ENCODE measurements at regions of chrX and their contacts with region 1.

Region 1: GRCh38 chrX:130902783-130903613 is at the start of gene ENOX2:
- DNase-seq: peak; percentile 96
- ATAC-seq: peak; percentile 98
- H3K4me3 ChIP-seq: peak within 1 kb of the TSS; percentile 72
- H3K27ac ChIP-seq: peak within 1 kb of the TSS; percentile 74
- H3K4me1 ChIP-seq: peaks cover 5% of the 10 kb centered on the region; the same call in 1 of the 2 replicates
- H3K27me3 ChIP-seq: no peaks in the 10 kb centered on the region
- CTCF ChIP-seq: no peak
- total RNA-seq, gene ENOX2: 11.8 and 17.3 TPM in 2 replicates

Region 2: DNA sequence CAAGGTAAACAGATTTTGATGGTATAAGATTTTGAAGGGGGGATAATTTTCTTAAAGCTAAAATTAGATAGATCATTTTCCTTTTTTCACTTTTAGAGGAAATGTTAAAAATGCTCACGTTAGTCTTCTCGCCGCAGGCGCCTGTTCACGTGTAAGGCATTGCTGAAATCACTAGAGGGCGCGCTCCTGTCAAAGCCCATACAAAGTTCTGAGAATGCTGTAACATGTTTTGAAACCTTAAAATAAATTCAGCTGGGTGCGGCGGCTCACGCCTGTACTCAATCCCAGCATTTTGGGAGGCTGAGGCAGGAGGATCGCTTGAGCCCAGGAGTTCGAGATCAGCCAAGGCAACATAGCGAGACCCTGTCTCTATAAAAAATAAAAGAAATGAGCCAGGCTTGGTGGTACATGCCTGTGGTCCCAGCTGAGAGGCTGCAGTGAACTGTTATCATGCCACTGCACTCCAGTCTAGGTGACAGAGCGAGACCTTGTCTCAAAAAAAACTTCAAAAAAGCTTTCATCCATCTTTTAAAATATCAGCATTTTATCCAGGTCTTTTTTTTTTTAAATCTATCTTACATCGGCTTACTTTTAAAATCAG is 363.2 kb before region 1 on chrX:
- CTCF ChIA-PET with region 1: no interaction called
- POLR2A ChIA-PET with region 1: no interaction called
- intact Hi-C with region 1: loop called (anchors 5 kb)
- DNase-seq: peak; percentile 63
- ATAC-seq: peak; percentile 55
- H3K4me3 ChIP-seq: no peak overlapping the region
- H3K27ac ChIP-seq: no peak overlapping the region
- H3K4me1 ChIP-seq: no peaks in the 10 kb centered on the region
- H3K27me3 ChIP-seq: no peaks in the 10 kb centered on the region
- CTCF ChIP-seq: peak; percentile 78

Region 3: GRCh38 chrX:130716781-130717413 is 186.1 kb before region 1 on chrX:
- CTCF ChIA-PET with region 1: no interaction called
- POLR2A ChIA-PET with region 1: no interaction called
- intact Hi-C with region 1: loop called (anchors 2 kb)
- DNase-seq: peak; percentile 25
- ATAC-seq: peak; percentile 57
- H3K4me3 ChIP-seq: no peak overlapping the region
- H3K27ac ChIP-seq: peak overlapping the region; percentile 6; the same call in 1 of the 2 replicates
- H3K4me1 ChIP-seq: peaks cover 40% of the 10 kb centered on the region
- H3K27me3 ChIP-seq: no peaks in the 10 kb centered on the region
- CTCF ChIP-seq: no peak

Region 4: DNA sequence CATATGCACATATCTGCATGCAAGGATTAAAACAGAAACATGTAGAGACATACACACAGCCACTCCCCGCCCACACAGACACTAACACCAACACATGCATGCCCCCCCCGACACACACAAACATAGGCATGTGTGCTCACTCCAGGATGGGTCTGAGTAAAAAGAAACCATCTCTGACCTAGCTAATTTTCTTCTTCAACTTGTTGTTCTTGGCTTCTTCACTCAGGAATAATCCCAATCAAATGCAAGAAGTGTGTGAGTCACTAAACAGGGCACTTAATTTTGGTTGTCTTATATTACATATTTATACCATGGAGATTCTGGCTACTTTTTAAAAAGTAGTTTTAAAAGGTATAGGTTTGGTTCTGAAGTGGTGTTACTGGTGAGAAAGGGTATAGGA is 28.2 kb before region 1 on chrX:
- CTCF ChIA-PET with region 1: no interaction called
- POLR2A ChIA-PET with region 1: no interaction called
- intact Hi-C with region 1: no loop called
- DNase-seq: no peak
- ATAC-seq: no peak
- H3K4me3 ChIP-seq: no peak overlapping the region
- H3K27ac ChIP-seq: no peak overlapping the region
- H3K4me1 ChIP-seq: peaks cover 22% of the 10 kb centered on the region
- H3K27me3 ChIP-seq: no peaks in the 10 kb centered on the region
- CTCF ChIP-seq: no peak

Region 5: DNA sequence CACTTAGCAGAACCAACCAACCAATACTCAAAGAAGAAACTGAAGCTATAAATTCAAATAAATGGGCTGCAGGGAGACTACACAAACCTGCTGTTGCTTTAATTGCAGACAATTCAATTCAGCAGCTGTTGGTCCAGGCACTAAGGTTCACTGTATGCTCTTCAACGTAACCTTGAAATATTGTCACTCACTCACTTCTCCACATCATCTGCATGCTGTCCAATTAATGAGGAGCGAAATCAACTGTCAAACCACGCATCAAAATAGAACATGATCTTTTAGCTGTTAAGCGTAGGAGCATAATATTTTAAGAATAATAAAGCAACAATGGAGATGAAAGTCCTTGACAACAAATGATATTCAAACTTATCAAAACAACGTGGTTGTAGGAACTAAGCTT is 17.0 kb before region 1 on chrX:
- CTCF ChIA-PET with region 1: no interaction called
- POLR2A ChIA-PET with region 1: interaction called, 14 read pairs
- intact Hi-C with region 1: loop called (anchors 2 kb)
- DNase-seq: no peak
- ATAC-seq: no peak; the same call in 1 of the 2 replicates
- H3K4me3 ChIP-seq: no peak overlapping the region
- H3K27ac ChIP-seq: peak overlapping the region; percentile 59
- H3K4me1 ChIP-seq: peaks cover 18% of the 10 kb centered on the region
- H3K27me3 ChIP-seq: no peaks in the 10 kb centered on the region
- CTCF ChIP-seq: no peak

Region 6: GRCh38 chrX:130933358-130933757 is 30.4 kb after region 1 on chrX:
- CTCF ChIA-PET with region 1: no interaction called
- POLR2A ChIA-PET with region 1: no interaction called
- intact Hi-C with region 1: no loop called
- DNase-seq: no peak
- ATAC-seq: no peak
- H3K4me3 ChIP-seq: no peak overlapping the region
- H3K27ac ChIP-seq: no peak overlapping the region
- H3K4me1 ChIP-seq: no peaks in the 10 kb centered on the region
- H3K27me3 ChIP-seq: no peaks in the 10 kb centered on the region
- CTCF ChIP-seq: no peak

Region 7: GRCh38 chrX:130975947-130976346 is 72.9 kb after region 1 on chrX:
- CTCF ChIA-PET with region 1: no interaction called
- POLR2A ChIA-PET with region 1: no interaction called
- intact Hi-C with region 1: no loop called
- DNase-seq: peak; percentile 79
- ATAC-seq: peak; percentile 73
- H3K4me3 ChIP-seq: no peak overlapping the region
- H3K27ac ChIP-seq: no peak overlapping the region
- H3K4me1 ChIP-seq: peaks cover 5% of the 10 kb centered on the region; the same call in 1 of the 2 replicates
- H3K27me3 ChIP-seq: no peaks in the 10 kb centered on the region; the same call in 1 of the 2 replicates
- CTCF ChIP-seq: peak; percentile 75

Region 8: GRCh38 chrX:131235768-131236545 is 333.0 kb after region 1 on chrX:
- CTCF ChIA-PET with region 1: no interaction called
- POLR2A ChIA-PET with region 1: no interaction called
- intact Hi-C with region 1: no loop called
- DNase-seq: no peak
- ATAC-seq: no peak
- H3K4me3 ChIP-seq: no peak overlapping the region
- H3K27ac ChIP-seq: no peak overlapping the region
- H3K4me1 ChIP-seq: no peaks in the 10 kb centered on the region
- H3K27me3 ChIP-seq: no peaks in the 10 kb centered on the region
- CTCF ChIP-seq: no peak